Stomach (tissue), 19 donors: ENCODE measurements at regions of chr12 and their contacts with region 1.

Region 1: DNA sequence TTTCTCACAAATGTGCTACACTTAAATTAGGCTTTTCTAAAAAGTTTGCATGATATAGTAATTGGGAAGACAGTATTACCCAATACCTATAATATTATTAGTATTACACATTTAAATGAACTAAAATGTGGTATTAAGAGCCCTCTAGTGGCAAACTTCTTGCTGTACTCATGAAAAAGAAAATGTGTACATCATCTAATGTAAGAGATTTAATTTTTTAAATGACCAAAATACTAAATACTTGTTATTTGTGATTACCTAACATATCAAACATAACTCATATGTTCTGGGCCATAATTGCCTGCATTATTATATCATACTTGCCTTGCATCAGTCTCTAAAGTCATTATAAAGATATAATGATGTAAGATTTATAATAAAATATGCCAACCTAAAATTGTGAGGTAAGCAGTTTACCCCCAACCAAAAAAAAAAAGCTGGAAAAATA is 64.2 kb downstream of the DNAI7 start:
- DNase-seq: peak in 1 of 2 donors; percentile 57
- H3K4me3 ChIP-seq: no peak overlapping the region
- H3K27ac ChIP-seq: no peak overlapping the region
- H3K4me1 ChIP-seq: no peaks in the 10 kb centered on the region
- H3K27me3 ChIP-seq: no peaks in the 10 kb centered on the region
- CTCF ChIP-seq: peak in 4 of 7 experiments; percentile 41 to 70 (median 54)
- EP300 ChIP-seq: no peak
- POLR2A ChIP-seq: no peak

Region 2: GRCh38 chr12:24997970-24998582 is 132.7 kb before region 1 on chr12:
- intact Hi-C with region 1: loop called (anchors 5 kb)
- DNase-seq: peak in 1 of 2 donors; percentile 30
- H3K4me3 ChIP-seq: no peak overlapping the region
- H3K27ac ChIP-seq: peak overlapping the region in 2 of 5 donors; percentile 28 to 53
- H3K4me1 ChIP-seq: peaks cover 0 to 14% (median 0%) of the 10 kb centered on the region in 4 donors
- H3K27me3 ChIP-seq: no peaks in the 10 kb centered on the region
- CTCF ChIP-seq: no peak
- EP300 ChIP-seq: no peak
- POLR2A ChIP-seq: no peak